Activated B cell treated with CpG ODN at 0.5 μM for 24 hours (primary cell): ENCODE measurements at regions of chr11 and their contacts with region 1.

Region 1: GRCh38 chr11:64341851-64342791 is 2.1 kb downstream of the CCDC88B start:
- DNase-seq: peak; percentile 87
- ATAC-seq: peak; percentile 51
- H3K4me3 Mint-ChIP-seq: peak overlapping the region; percentile 19
- H3K27ac Mint-ChIP-seq: no peak overlapping the region
- H3K4me1 Mint-ChIP-seq: peaks cover 54% of the 10 kb centered on the region
- H3K27me3 Mint-ChIP-seq: no peaks in the 10 kb centered on the region
- CTCF ChIP-seq: no peak

Region 2: DNA sequence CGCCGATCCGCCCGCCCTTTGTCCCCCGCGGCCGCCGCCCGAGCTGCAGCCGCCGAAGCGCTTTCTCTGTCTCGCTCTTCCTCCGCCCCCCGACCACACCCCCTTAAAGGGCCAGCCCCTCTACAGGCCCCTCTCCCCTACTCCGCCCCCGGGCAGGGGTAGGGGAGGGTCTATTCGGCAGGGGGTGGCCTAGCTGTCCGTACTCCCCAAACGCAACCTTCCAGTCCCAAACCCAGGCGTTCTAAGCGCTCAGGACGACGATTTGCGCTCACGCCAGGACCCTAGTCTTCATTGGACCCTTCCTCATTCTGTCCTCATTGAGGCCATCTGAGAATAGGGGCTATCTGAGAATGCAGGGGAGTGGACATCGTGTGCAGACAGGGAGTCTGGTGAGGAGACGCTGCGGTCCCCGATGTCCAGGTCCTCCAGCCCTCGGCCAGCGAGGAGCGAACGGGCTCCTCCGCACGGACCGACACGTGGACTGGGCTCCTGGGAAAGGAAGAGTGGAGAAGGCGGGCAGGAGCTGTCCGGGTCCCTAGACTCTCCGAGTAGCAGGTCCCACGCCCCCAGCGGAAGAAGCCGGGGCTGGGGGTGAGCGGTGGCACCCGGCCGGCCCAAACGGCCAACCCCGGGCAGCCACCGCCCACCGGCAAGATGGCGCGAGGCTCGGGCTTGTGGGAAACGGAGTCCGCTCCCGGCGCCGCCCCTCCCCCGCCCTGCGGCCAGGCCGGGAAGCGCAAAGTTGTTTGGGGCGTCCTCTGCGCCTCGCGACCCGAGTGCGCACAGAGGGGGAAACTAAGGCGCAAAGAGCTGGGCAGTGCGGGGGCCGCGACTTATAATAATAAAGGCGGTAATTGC is 95.0 kb before region 1 on chr11 and contains the start of gene PPP1R14B:
- CTCF ChIA-PET with region 1: no interaction called
- POLR2A ChIA-PET with region 1: no interaction called
- intact Hi-C with region 1: loop called (anchors 1 kb)
- DNase-seq: peak; percentile 78
- ATAC-seq: peak; percentile 63
- H3K4me3 Mint-ChIP-seq: peak within 1 kb of the TSS; percentile 90
- H3K27ac Mint-ChIP-seq: peak within 1 kb of the TSS; percentile 87
- H3K4me1 Mint-ChIP-seq: peaks cover 43% of the 10 kb centered on the region
- H3K27me3 Mint-ChIP-seq: no peaks in the 10 kb centered on the region
- CTCF ChIP-seq: no peak
- total RNA-seq, gene PPP1R14B: 112 and 127 TPM in 2 replicates

Region 3: DNA sequence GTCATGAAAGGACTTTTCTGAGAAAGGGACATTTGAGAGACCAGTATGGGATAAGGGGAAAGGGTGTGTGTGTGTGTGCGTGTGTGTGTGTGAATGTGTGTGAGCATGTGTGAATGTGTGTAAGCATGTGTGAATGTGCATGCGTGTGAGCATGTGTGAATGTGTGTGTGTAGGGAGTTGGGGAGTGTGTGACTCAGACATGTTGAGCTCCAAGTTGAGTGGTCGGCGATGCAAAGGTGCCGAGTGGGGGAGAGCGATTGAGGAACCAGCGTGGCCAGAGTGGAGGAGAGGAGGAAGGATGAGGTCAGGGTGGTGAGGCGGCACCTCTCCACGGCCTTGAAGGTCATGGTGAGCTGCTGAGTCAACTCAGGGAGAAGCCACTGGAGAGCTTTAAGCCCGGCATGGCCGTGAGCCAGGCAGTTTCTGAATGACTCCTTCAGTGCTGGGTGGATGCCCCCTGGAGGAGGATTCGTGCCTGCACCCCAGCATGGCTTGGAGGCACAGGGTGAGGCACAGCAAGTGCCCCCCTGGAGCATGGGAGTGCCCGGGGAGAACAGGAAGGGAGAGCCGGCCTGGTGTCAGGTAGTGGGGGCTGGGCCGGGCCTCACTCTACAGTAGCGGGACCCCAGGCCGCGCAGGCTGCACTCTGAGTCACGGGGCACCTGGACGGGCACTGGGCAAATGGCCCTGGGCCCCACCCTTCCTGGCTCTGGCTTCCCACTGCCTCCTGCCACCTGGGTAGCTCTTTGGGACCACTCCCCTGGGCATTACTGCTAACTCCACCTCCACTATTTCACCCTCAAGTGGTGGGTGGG is 10.4 kb before region 1 on chr11:
- CTCF ChIA-PET with region 1: interaction called, 6 read pairs
- POLR2A ChIA-PET with region 1: interaction called, 18 read pairs
- intact Hi-C with region 1: no loop called
- DNase-seq: peak; percentile 52
- ATAC-seq: peak; percentile 32
- H3K4me3 Mint-ChIP-seq: peak overlapping the region; percentile 2
- H3K27ac Mint-ChIP-seq: peak overlapping the region; percentile 5
- H3K4me1 Mint-ChIP-seq: peaks cover 35% of the 10 kb centered on the region
- H3K27me3 Mint-ChIP-seq: no peaks in the 10 kb centered on the region
- CTCF ChIP-seq: no peak

Region 4: DNA sequence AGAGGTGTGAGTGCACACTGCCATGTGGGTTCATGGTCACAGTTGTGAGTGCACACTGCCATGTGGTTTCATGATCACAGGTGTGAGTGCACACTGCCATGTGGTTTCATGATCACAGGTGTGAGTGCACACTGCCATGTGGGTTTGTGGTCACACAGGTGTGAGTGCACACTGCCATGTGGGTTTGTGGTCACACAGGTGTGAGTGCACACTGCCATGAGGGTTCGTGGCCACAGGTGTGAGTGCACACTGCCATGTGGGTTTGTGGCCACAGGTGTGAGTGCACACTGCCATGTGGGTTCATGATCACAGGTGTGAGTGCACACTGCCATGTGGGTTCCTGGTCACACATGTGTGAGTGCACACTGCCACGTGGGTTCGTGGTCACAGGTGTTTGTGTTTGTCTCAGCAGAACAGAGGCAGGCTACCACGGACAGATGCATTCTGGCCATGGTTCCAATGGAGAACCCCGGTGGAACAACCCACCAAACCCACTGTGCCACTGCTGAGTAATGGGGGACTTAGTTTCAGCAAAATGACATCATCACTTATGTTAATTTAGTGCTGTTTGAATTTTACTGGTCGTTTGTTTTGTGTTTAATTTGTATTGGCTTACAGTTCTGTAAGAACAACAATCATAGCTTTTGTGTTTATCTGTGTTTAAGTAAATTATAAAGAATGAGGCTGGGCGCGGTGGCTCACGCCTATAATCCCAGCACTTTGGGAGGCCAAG is 74.0 kb after region 1 on chr11:
- CTCF ChIA-PET with region 1: no interaction called
- POLR2A ChIA-PET with region 1: interaction called, 13 read pairs
- intact Hi-C with region 1: no loop called
- DNase-seq: no peak
- ATAC-seq: no peak
- H3K4me3 Mint-ChIP-seq: no peak overlapping the region
- H3K27ac Mint-ChIP-seq: no peak overlapping the region
- H3K4me1 Mint-ChIP-seq: peaks cover 11% of the 10 kb centered on the region
- H3K27me3 Mint-ChIP-seq: peaks cover 4% of the 10 kb centered on the region
- CTCF ChIP-seq: no peak